ENCODE measurements at regions of chr15 and their contacts with region 1.

Region 1: DNA sequence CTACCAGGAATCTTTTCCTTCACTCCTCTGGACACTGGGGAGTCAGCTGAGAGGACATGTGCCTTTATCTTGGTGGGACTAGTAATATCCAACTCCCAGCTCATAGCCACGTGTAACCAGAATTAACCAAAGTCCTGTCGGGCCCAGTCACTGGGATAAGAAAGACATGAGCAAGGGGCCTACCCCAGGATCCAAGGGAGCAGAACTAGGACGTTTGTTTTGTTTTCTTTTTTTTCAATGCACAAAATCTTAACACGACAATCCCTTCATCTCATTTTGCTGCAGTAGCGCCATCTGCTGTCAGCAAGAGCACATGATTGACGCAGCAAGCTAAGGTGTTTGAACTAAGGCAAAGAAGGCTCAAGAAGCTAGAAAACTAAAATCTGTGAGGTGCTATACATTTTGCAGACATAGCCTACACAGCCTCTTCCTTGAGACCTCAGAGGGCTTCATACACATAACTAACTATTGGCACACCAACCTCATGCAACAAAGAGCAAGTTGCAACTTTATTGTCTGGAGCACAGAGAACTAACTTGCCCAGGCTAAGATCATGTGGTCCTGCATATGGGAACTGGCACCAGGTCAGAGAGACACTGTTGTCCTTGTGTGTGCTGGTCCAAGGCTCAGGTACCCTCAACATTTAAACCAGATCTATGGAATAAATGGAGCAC is 43.6 kb downstream of the RLBP1 start:
- DNase-seq: peak; percentile 79 to 91 (median 85)
- H3K4me3 ChIP-seq: no peak overlapping the region
- H3K27ac ChIP-seq: no peak overlapping the region
- H3K4me1 ChIP-seq: peaks cover 0 to 6% (median 0%) of the 10 kb centered on the region in 4 experiments
- H3K27me3 ChIP-seq: no peaks in the 10 kb centered on the region

Region 2: DNA sequence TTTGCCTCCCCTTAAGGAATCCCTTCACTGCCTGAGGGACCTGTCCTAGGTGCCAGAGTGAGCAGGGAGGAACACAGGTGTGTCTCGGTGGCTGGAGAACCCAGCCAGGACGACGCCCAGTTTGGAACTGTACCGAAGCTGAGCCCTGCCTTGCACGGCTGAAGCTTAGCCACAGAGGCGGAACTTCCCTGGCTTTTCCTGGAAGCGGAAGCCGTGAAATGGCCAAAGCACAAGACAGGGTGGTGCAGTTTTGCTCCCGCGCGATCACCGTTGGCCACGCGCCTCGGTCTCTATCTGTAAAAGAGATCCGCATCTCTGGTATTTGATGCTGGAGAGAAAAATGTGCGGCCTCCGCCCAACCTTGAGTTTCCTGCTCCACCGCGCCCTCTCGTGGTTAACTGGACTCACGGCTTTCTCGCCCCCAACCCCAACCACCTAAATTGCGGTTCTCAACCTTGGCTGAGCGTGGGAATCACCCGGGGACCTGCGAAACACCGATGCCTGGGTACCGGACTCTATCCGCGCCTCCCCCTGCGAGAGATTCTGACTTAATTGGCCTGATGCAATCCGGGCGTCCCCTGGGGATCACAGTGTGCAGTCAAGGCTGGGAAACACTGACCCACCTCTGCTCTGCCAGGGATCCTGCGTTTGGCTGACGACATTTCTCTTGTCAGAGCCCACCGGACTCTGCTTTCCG is 160.3 kb before region 1 on chr15:
- CTCF ChIA-PET with region 1: interaction called, 10 read pairs
- POLR2A ChIA-PET with region 1: no interaction called
- DNase-seq: peak; percentile 76 to 88 (median 87)
- H3K4me3 ChIP-seq: peak overlapping the region in 5 of 7 experiments; percentile 20 to 67 (median 54)
- H3K27ac ChIP-seq: no peak overlapping the region
- H3K4me1 ChIP-seq: peaks cover 2 to 52% (median 40%) of the 10 kb centered on the region in 4 experiments
- H3K27me3 ChIP-seq: no peaks in the 10 kb centered on the region

Region 3: GRCh38 chr15:89087830-89088604 is 89.8 kb before region 1 on chr15 and contains the start of gene ABHD2:
- CTCF ChIA-PET with region 1: interaction called, 20 read pairs
- POLR2A ChIA-PET with region 1: no interaction called
- DNase-seq: peak; percentile 100
- H3K4me3 ChIP-seq: peak within 1 kb of the TSS; percentile 70 to 95 (median 91)
- H3K27ac ChIP-seq: peak within 1 kb of the TSS; percentile 77 to 89
- H3K4me1 ChIP-seq: peaks cover 27 to 70% (median 56%) of the 10 kb centered on the region in 4 experiments
- H3K27me3 ChIP-seq: no peaks in the 10 kb centered on the region

Region 4: GRCh38 chr15:89282631-89283030 is 104.9 kb after region 1 on chr15:
- CTCF ChIA-PET with region 1: no interaction called
- POLR2A ChIA-PET with region 1: no interaction called
- DNase-seq: no peak
- H3K4me3 ChIP-seq: no peak overlapping the region
- H3K27ac ChIP-seq: no peak overlapping the region
- H3K4me1 ChIP-seq: no peaks in the 10 kb centered on the region
- H3K27me3 ChIP-seq: no peaks in the 10 kb centered on the region